HEK293T (cell line): ENCODE measurements at regions of chr1 and their contacts with region 1.

Region 1: GRCh38 chr1:233197940-233198339 is 97.6 kb downstream of the PCNX2 start:
- DNase-seq: no peak

Region 2: DNA sequence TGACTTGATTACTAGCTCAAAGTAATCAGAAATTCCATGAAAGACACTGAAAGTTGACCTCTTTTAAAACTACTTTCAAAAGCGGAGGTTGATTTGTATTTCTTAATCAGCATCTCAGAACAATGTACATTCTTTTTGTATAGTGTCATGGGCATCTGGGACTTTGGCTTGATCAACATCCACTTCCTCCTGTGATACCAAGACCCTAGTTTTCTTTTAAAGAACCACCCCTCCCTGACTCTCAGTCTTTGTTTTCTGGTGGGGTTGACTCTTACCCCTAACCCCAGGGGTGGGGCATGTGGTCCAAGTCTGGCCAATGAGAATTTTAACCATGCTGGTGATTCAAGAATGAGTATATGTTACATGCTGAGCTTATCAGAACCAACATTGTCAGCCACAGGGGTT is 1433.8 kb after region 1 on chr1:
- CTCF ChIA-PET with region 1: interaction called, 10 read pairs
- POLR2A ChIA-PET with region 1: no interaction called
- DNase-seq: no peak